ENCODE measurements at regions of chr9 and their contacts with region 1.

Region 1: GRCh38 chr9:15104826-15105420 is 194.7 kb upstream of the FREM1 start:
- DNase-seq: no peak
- ATAC-seq: no peak

Region 2: DNA sequence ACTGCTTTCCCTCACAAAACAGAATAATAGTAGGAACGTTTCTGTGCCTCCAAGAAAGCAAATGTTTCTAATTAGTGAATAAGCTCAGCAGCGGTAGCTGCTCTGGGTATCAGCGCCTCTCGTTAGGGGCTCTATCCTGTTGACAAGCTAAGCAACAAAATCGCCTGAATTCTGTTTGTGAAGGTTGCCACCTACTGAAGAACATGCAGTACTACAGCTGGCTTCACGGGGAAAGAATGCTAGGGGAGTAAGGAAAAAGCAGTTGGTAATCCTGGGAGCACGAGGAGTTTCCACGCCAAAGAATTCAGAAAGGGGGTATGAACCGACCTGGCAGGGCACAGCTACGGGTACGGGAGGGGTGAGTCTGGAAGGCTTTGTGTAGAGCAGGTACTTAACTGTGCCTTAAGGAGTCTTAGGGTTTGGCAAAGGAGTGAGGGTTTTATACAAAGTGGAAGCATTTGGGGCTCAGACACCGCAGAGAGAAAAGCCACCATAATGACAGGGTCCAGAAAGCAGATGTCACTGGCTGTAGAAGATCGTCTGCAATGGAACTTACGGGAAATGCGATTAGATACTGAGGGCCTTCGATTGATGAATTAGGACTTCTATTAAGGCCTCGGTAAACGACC is 30.4 kb after region 1 on chr9:
- intact Hi-C with region 1: loop called (anchors 2 kb)
- DNase-seq: no peak
- ATAC-seq: peak; percentile 86

Measured in Right ventricle myocardium inferior (tissue), 1 donor.